Right ventricle myocardium superior (tissue), 1 donor: ENCODE measurements at regions of chr20 and their contacts with region 1.

Region 1: DNA sequence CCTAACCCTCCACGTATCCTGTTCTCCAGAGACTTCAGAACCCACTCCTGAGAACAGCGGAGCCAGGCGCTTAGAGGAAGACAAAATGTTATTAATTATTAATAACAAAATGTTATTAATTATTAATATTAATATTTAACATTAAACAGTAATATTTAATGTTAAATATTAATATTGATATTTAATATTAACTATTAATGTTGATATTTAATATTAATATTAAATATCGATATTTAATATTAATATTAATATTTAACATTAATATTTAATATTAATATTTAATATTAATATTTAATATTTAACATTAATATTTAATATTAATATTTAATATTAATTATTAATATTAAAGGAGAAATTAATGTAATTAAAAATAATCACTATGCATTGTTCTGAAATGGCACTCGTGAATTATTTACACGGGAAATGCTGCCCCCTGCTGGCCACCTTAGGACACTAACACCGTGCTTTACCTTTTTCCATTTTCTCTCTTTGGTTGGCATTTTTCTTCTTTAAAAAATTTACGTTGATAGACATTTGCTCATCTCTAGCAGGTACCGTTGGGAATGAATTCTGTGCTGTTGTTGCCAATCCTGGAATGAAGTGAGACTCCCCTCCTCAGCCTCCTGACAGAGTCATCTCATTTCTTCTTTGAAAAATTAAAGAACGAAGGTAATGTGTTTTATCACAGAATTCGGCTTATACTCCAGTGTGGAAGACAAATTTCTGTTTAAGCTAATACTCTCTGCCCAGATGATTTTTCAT is 7.5 kb upstream of the GGTLC1 start:
- DNase-seq: peak; percentile 63
- ATAC-seq: peak; percentile 53

Region 2: GRCh38 chr20:23889775-23890211 is 106.3 kb before region 1 on chr20:
- intact Hi-C with region 1: loop called (anchors 5 kb)
- DNase-seq: peak; percentile 49
- ATAC-seq: peak; percentile 89

Region 3: DNA sequence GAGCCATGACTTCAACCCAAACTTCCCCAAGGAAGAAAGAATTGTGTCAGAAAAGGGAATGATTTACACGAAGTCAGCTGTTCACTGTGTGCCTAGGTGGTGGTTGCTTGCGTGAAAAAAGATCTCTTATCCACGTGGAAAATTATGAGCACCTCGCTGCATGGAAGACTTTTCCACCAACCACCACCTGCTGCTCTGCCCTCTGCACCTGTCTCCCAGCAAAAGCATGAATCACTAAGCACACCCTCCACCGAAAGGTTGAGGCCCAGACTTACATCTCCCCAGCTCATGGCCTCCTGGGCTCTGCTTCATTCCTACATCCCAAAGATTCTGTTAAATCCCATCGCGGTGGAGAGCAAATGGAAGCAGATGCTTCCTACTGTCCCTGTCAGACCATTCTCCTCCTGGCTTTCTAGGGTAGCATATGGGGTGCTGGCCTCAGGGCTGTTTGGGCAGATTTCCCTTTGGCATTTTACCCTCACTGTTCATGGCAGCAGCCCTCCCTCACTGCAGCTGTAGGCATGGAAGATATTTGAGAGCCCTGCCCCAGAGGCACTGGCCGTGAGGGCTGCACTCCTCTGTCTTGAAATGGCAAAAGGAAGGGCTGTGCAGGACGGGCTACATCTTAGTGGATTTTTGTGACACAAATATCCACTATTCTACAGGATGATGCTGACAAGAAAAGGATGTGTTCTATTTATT is 78.9 kb before region 1 on chr20:
- intact Hi-C with region 1: no loop called
- DNase-seq: no peak
- ATAC-seq: no peak